Calu3 (cell line): ENCODE measurements at regions of chr2 and their contacts with region 1.

Region 1: GRCh38 chr2:219029829-219030165 is 11.5 kb downstream of the CFAP65 start:
- DNase-seq: peak; percentile 92
- H3K4me3 Mint-ChIP-seq: no peak overlapping the region
- H3K27ac Mint-ChIP-seq: no peak overlapping the region
- H3K4me1 Mint-ChIP-seq: no peaks in the 10 kb centered on the region
- H3K27me3 Mint-ChIP-seq: no peaks in the 10 kb centered on the region
- CTCF ChIP-seq: peak; percentile 96

Region 2: DNA sequence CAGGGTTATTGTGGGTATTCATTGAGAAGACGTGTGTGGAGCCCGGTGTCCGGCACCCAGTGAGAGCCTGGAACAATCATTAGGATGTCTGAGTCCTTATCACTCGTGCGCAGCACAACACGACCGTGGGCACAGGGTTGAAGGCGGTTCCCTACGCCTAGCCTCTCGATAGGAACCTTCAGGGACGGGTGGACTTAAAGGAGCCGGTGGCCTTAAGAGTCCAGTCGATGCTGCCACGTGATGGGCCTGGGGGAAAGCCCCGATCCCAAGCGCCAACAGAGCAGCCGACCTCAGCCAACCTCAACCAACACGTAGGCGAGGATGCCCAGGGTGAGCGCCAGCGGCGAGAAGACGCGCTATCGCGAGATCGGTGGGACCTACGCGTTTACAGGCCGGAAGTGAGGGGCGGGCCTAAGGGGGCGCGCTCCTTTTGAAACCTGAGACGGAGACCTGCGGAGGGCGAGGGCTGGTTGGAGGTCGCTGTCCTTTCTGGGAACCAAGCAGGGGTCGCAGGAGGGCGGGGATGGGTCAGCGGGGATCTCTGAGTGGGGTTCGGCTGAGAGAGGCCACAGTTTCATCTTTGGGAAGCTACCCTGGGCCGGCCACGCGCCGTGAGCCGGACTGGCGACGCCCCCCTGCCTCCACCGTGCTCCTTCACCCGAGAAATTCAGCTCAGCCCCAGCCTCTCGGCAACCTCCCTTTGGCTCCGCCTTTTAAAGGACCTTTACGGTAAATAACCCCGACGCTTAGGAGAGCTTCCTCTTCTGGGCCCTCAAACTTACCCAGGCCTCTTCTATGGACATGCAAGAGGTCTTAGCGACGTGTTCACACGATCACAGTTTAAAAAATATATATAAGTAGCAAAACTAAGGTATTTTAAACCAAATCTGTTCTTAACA is 120.8 kb before region 1 on chr2:
- CTCF ChIA-PET with region 1: no interaction called
- intact Hi-C with region 1: no loop called
- DNase-seq: peak; percentile 94
- H3K4me3 Mint-ChIP-seq: peak overlapping the region; percentile 77
- H3K27ac Mint-ChIP-seq: peak overlapping the region; percentile 69
- H3K4me1 Mint-ChIP-seq: peaks cover 24% of the 10 kb centered on the region
- H3K27me3 Mint-ChIP-seq: peaks cover 11% of the 10 kb centered on the region
- CTCF ChIP-seq: no peak

Region 3: DNA sequence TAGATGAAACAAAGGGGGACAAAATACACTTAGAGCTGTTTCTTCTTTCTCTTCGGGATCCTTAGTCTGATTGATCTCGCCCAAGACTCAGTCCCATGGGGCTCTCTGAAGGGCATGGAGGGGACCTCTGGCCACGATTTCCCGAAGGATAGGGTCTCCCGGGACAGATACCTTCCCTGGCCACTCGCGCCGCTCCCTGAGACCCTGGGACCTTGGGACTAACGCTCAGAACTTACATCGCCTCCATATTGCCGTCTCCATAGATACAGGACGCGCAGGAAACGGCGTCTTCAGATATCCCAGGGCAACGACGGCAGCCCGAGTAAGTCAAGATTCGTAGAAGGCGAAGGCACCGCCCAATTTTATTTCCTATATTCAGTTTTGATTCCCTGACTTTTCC is 11.5 kb after region 1 on chr2 and contains the start of gene CFAP65:
- CTCF ChIA-PET with region 1: interaction called, 20 read pairs
- intact Hi-C with region 1: no loop called
- DNase-seq: peak; percentile 77
- H3K4me3 Mint-ChIP-seq: peak within 1 kb of the TSS; percentile 74
- H3K27ac Mint-ChIP-seq: peak within 1 kb of the TSS; percentile 18
- H3K4me1 Mint-ChIP-seq: peaks cover 41% of the 10 kb centered on the region
- H3K27me3 Mint-ChIP-seq: no peaks in the 10 kb centered on the region
- CTCF ChIP-seq: no peak
- total RNA-seq, gene CFAP65: 0.68 and 1.3 TPM in 2 replicates

Region 4: GRCh38 chr2:219057709-219058540 is 28.1 kb after region 1 on chr2:
- CTCF ChIA-PET with region 1: interaction called, 44 read pairs
- intact Hi-C with region 1: loop called (anchors 1 kb)
- DNase-seq: peak; percentile 93
- H3K4me3 Mint-ChIP-seq: peak overlapping the region; percentile 76
- H3K27ac Mint-ChIP-seq: no peak overlapping the region
- H3K4me1 Mint-ChIP-seq: peaks cover 36% of the 10 kb centered on the region
- H3K27me3 Mint-ChIP-seq: peaks cover 22% of the 10 kb centered on the region
- CTCF ChIP-seq: peak; percentile 91

Region 5: GRCh38 chr2:219104107-219105035 is 74.6 kb after region 1 on chr2:
- CTCF ChIA-PET with region 1: interaction called, 27 read pairs
- intact Hi-C with region 1: no loop called
- DNase-seq: peak; percentile 43
- H3K4me3 Mint-ChIP-seq: no peak overlapping the region
- H3K27ac Mint-ChIP-seq: no peak overlapping the region
- H3K4me1 Mint-ChIP-seq: no peaks in the 10 kb centered on the region
- H3K27me3 Mint-ChIP-seq: no peaks in the 10 kb centered on the region
- CTCF ChIP-seq: peak; percentile 88

Region 6: DNA sequence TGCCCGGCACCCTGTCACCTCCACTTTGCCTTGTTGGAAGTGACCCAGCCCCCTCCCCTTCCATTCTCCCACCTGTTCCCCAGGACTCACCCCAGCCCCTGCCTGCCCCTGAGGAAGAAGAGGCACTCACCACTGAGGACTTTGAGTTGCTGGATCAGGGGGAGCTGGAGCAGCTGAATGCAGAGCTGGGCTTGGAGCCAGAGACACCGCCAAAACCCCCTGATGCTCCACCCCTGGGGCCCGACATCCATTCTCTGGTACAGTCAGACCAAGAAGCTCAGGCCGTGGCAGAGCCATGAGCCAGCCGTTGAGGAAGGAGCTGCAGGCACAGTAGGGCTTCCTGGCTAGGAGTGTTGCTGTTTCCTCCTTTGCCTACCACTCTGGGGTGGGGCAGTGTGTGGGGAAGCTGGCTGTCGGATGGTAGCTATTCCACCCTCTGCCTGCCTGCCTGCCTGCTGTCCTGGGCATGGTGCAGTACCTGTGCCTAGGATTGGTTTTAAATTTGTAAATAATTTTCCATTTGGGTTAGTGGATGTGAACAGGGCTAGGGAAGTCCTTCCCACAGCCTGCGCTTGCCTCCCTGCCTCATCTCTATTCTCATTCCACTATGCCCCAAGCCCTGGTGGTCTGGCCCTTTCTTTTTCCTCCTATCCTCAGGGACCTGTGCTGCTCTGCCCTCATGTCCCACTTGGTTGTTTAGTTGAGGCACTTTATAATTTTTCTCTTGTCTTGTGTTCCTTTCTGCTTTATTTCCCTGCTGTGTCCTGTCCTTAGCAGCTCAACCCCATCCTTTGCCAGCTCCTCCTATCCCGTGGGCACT is 152.7 kb after region 1 on chr2:
- CTCF ChIA-PET with region 1: no interaction called
- intact Hi-C with region 1: no loop called
- DNase-seq: no peak
- H3K4me3 Mint-ChIP-seq: no peak overlapping the region
- H3K27ac Mint-ChIP-seq: no peak overlapping the region
- H3K4me1 Mint-ChIP-seq: peaks cover 15% of the 10 kb centered on the region
- H3K27me3 Mint-ChIP-seq: no peaks in the 10 kb centered on the region
- CTCF ChIP-seq: no peak